Panc1 (cell line): ENCODE measurements at regions of chr1 and their contacts with region 1.

Region 1: DNA sequence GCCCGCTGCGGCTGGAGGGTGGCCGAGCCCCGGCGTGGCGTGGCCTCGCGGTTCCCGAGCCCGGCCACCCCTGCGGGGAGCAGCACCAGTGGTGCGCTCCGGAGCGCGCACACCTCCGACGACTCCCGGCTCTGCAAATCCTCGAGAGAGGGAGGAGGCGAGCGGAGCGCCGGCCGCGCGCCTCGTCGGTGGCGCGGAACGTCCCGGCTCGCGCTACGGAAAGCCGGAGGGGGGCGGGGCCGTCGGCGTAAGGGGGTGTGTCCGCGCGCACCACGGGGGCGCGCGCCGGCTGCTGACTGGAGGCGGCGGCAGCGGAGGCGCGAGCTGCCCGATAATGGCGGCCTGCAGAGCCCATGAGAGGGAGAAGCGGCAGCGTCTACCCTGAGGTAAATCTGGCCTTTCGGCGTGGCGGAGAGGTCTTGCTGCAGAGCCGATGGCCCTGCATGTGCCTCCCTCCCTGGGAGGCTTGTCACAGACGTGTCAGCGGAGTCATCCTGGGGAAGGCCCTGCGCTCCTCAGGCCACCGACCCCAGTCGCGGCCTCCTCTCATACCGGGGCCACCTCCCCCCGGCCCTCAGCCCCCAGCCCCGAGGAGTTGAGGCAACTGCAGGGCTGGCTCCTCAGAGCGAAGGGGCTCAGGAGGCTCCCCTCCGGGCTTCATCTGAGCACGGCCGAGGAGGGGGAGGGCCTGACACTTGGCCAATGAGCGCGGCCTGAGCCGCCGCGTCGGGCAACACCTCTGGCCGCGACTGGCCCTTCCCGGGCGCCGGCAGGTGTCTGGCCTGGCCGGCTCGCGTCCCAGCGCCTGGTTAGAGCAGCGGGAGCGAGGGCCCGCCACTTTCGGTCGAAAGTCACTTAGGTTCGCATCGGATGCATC is at the start of gene PDIK1L:
- DNase-seq: peak; percentile 68
- ATAC-seq: peak; percentile 91
- H3K4me3 ChIP-seq: peak within 1 kb of the TSS; percentile 85 to 94
- H3K27ac ChIP-seq: peak within 1 kb of the TSS; percentile 83
- H3K4me1 ChIP-seq: peaks cover 17% of the 10 kb centered on the region
- H3K27me3 ChIP-seq: no peaks in the 10 kb centered on the region
- CTCF ChIP-seq: no peak
- total RNA-seq, gene PDIK1L: 8.0 TPM

Region 2: DNA sequence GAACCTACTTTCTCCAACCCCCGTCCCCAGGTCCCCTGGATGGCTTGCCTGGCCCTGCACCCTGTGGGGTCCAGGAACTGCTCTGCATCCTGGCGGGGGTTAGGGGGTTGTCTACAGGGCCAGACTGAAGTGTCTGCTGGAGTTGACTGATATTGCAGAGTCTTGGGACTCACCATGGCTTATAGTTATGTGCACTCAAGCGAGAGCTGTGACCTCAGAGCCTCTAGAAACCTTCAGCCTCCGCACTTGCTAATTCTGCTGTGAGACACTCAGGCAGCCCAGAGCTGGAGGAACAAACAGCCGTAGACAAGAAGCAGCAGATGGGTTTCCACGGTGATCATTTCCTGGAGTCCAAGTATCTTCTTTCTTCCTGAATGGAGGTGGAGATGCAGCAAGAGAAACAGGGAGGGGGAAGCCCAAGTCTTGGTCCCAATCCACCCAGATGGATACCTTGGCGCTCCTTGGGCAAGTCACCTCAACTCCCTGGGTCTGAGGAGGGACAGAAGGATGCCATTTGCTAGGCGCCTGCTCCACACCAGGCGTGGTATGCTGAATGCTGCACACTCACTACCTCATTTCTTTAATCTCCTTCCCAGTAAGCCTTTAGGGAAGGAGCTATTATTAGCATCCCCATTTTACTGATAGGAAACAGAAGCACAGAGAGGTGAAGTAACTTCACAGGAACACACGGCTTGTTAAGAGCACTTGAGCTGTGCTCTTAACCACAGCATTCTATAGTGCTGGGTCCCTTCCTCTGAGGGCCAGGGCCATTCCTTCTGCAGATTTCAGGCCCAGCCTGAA is 95.2 kb before region 1 on chr1:
- CTCF ChIA-PET with region 1: interaction called, 10 read pairs
- POLR2A ChIA-PET with region 1: no interaction called
- in situ Hi-C with region 1: no loop called
- intact Hi-C with region 1: no loop called
- DNase-seq: no peak
- ATAC-seq: no peak
- H3K4me3 ChIP-seq: no peak overlapping the region
- H3K27ac ChIP-seq: no peak overlapping the region
- H3K4me1 ChIP-seq: 0 out of 2 replicates have a peak, but pooled peaks cover 3% of the 10 kb centered on the region
- H3K27me3 ChIP-seq: no peaks in the 10 kb centered on the region
- CTCF ChIP-seq: no peak

Region 3: DNA sequence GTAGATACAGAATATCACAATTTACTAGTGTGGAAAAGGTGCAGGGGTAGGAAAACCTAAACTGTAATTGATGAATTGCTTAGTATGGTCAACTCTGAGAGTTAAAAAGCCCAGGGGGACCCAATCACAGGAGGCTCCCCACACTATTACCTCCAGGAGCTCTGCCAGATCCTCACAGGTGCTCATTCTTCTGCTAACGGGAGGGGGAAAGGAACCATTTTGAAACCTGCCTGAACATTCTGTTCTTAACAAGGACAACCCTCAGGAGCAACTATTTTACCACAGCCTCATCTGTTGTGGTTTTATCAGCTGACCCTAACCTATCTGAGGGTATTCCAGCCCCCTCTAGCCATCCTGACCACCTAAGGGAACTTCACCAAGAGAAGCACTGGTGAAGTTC is 18.9 kb after region 1 on chr1:
- CTCF ChIA-PET with region 1: no interaction called
- POLR2A ChIA-PET with region 1: interaction called, 10 read pairs
- in situ Hi-C with region 1: no loop called
- intact Hi-C with region 1: no loop called
- DNase-seq: no peak
- ATAC-seq: no peak
- H3K4me3 ChIP-seq: no peak overlapping the region
- H3K27ac ChIP-seq: no peak overlapping the region
- H3K4me1 ChIP-seq: peaks cover 10% of the 10 kb centered on the region
- H3K27me3 ChIP-seq: no peaks in the 10 kb centered on the region
- CTCF ChIP-seq: no peak

Region 4: GRCh38 chr1:27275696-27276095 is 1163.9 kb after region 1 on chr1:
- CTCF ChIA-PET with region 1: no interaction called
- POLR2A ChIA-PET with region 1: no interaction called
- in situ Hi-C with region 1: no loop called
- intact Hi-C with region 1: no loop called
- DNase-seq: no peak
- ATAC-seq: no peak
- H3K4me3 ChIP-seq: no peak overlapping the region
- H3K27ac ChIP-seq: no peak overlapping the region
- H3K4me1 ChIP-seq: no peaks in the 10 kb centered on the region
- H3K27me3 ChIP-seq: no peaks in the 10 kb centered on the region
- CTCF ChIP-seq: no peak